Right ventricle myocardium superior (tissue), 1 donor: ENCODE measurements at regions of chr17 and their contacts with region 1.

Region 1: GRCh38 chr17:27601069-27601975 is 29.7 kb upstream of the LGALS9 start:
- DNase-seq: peak; percentile 81
- ATAC-seq: peak; percentile 58

Region 2: DNA sequence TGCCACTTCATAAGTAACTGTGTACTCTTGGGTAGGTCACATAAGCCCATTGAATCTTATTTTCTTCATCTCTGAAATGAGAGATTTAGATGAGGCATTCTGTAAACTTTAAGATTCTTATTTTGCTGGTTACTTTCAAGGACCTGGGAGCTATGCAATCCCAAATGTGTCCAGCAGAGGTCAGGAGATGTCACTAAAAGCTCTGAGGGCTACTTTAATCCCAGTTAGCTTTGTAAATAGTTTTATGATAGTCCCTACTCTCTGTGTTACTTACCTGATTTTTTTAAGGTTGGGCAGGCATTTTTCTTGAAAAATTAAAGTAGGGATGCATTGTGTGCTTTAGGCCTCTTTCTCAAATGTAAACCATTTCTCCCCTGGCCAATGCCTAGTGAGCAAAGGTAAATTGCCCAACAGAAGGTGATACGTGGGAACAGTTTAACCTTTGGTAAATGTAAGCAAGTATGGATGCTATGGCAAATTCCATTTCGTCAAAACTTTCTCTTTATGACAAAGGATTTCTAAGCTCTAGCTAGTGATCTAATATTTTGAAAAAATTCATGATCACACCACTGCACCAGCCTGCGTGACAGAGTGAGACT is 364.5 kb before region 1 on chr17:
- intact Hi-C with region 1: loop called (anchors 2 kb)
- DNase-seq: no peak
- ATAC-seq: peak; percentile 80

Region 3: DNA sequence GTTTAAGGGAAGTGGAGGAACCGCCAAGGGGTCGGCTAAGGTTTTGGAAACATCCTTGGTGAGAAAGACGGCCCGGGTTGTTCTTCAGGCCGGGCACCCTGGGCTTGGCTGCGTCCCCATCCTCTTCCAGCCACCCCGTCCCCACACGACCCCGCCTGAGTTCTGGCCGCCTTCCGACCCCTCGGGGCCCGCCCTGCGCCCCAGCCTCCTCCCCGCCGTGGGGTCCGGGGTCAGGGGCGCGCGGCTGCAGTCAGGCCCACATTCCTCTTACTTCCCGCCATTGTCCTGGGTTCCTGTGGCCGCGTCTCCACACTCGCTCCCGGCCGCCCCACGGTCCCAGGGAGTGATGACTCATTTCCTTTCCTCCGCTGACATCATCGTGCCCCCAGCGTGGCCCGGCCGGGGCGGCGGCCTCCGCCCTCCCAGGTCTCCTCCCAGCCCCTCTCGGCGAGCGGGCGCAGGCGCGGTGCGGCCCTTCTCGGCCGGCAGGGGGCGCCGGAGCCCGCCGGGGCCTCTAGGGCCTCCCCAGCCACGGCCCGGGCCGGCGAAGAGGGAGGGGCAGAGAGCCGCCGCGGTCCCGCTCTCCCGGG is 247.8 kb before region 1 on chr17:
- intact Hi-C with region 1: loop called (anchors 2 kb)
- DNase-seq: peak; percentile 94
- ATAC-seq: peak; percentile 96

Region 4: DNA sequence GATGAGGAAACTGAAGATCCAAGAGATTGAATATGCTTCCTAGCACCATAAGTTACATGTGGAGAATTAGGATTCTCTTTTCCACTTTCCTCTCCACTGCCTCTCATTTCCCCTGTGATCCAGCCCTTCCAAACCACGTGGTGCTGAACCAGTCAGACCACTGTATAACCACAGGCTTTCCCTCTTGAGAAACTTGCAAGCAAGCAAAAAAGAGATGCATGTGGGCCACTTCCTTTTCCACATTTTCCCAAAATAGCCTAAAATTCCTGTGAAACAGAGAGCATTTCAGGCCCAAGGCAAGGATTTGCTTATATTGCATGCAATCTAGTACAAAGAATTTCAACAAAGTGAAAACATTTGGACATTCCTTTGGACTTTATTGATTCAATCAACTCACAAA is 204.4 kb before region 1 on chr17:
- intact Hi-C with region 1: no loop called
- DNase-seq: no peak
- ATAC-seq: peak; percentile 75

Region 5: DNA sequence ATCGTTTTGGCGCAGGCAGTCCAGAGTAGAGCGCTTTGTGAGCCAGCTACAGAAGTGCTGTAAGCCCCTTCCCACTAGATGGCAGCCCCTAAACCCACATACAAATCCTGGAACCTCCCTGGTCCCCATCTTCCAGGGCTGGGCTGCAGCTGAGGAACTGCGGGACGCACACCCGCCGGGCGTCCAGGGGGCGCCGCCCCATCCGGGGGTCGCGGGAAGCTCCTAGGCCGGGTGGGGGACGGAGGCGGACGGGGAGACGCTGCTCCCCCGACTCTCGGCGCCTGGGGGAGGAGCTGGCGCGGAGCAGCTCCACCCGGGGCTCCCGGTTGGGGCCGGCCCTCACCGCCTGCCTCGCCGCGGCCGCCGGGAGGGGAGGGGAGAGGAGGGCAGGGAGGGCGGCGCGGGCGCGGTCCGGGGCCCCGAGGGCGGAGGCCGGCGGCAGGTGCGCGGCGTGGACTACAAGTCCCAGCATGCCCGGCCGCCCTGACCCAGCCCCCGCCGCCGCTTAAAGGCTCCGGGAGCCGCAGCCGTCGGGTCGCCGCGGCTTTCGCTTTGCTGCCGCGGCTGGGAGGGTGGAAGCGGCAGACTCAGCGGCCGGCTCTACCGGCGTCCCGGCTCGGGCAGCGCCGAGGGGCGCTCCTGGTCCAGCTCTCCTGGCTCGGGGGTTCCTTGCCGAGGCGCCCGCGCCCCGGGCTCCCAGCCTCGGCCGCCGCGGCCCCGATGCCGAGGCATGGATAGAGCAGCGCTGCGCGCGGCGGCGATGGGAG is 145.2 kb before region 1 on chr17 and contains the start of gene KSR1:
- intact Hi-C with region 1: loop called (anchors 5 kb)
- DNase-seq: peak; percentile 89
- ATAC-seq: peak; percentile 96
- total RNA-seq, gene KSR1: 8.3 TPM

Region 6: GRCh38 chr17:27569257-27569722 is 32.0 kb before region 1 on chr17:
- intact Hi-C with region 1: no loop called
- DNase-seq: peak; percentile 66
- ATAC-seq: peak; percentile 73

Region 7: GRCh38 chr17:27654654-27655524 is 53.6 kb after region 1 on chr17:
- intact Hi-C with region 1: loop called (anchors 1 kb)
- DNase-seq: peak; percentile 81
- ATAC-seq: peak; percentile 44

Region 8: DNA sequence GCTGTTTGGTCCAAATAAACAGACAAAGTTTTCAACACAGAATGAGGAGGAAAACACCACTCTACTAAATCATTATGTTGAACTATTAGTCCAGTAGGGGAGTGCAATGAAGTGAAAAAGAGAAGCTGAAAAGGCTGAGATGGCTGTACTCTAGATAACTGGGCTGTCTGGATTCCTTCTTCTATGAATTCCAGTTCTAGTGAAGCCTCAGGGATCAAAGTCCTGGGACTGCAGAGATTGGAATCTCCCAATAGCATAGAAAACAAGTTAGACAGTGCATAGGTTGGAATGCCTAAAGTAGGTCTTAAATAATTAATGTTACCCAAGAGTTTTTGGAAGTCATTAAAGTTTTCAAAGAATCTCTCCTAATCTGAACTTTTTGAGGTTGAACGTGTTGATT is 89.6 kb after region 1 on chr17:
- intact Hi-C with region 1: no loop called
- DNase-seq: no peak
- ATAC-seq: no peak